Heart right ventricle (tissue), 16 donors: ENCODE measurements at regions of chr19 and their contacts with region 1.

Region 1: GRCh38 chr19:30649934-30650614 is 277.9 kb downstream of the ZNF536 start:
- DNase-seq: peak in 1 of 2 donors; percentile 33
- ATAC-seq: peak in 2 of 8 donors; percentile 29 to 54
- H3K4me3 ChIP-seq: no peak overlapping the region
- H3K27ac ChIP-seq: no peak overlapping the region
- H3K4me1 ChIP-seq: no peaks in the 10 kb centered on the region
- H3K27me3 ChIP-seq: peaks cover 0 to 88% (median 52%) of the 10 kb centered on the region in 7 donors
- CTCF ChIP-seq: peak in 8 of 9 donors; percentile 64 to 90 (median 76)

Region 2: DNA sequence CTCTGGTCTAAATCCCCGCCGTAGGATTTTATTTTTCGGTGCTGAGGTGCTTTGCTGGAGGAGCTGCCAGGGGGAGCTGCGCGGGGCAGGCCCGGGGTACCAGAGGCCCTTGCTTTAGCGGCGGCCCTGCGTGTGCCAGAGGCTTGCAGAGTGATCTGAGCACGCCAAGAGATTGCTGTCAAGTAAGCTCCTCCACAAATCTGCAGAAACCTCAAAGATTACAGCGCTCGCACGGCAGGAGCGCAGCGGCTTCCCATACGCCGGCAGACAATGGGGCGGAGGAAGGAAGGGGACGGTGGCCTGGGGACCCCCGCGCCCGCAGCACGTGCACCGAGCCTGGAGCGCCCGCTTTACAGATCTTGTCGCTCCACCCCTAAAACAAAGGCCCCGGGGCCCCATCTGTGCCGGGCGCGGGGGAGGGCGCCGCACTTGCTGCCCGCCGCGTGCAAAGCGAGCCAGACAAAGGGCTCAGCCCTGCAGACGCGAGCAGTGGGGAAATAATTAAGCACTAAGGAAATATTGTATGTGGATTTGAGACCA is 925.9 kb before region 1 on chr19:
- intact Hi-C with region 1: loop called in 1 of 10 experiments (anchors 10 kb)
- DNase-seq: no peak
- ATAC-seq: peak in 7 of 8 donors; percentile 16 to 61 (median 55)
- H3K4me3 ChIP-seq: peak overlapping the region in 9 of 10 donors; percentile 18 to 47 (median 41)
- H3K27ac ChIP-seq: no peak overlapping the region
- H3K4me1 ChIP-seq: peaks cover 3 to 16% (median 11%) of the 10 kb centered on the region in 9 donors
- H3K27me3 ChIP-seq: peaks cover 0 to 53% (median 32%) of the 10 kb centered on the region in 7 donors
- CTCF ChIP-seq: no peak

Region 3: DNA sequence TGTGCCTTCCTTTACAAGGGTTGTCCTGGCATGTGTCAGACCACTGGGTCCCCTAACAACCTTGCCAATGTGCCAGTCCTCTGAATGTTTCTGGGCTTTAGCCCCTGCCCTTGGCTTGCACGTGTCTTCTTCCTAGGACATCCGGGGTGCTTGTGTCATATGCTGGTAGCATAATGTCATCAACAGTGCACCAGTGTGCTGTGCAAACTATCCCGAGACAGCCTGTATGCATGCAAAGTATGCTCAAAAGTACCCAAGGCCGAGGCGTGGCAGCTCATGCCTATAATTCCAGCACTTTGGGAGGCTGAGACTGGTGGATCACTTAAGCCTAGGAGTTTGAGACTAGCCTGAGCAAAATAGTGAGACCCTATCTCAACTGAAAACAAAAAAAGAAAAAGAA is 914.3 kb before region 1 on chr19:
- intact Hi-C with region 1: loop called in 1 of 10 experiments (anchors 5 kb)
- DNase-seq: no peak
- ATAC-seq: no peak
- H3K4me3 ChIP-seq: no peak overlapping the region
- H3K27ac ChIP-seq: no peak overlapping the region
- H3K4me1 ChIP-seq: no peaks in the 10 kb centered on the region
- H3K27me3 ChIP-seq: peaks cover 0 to 49% (median 16%) of the 10 kb centered on the region in 7 donors
- CTCF ChIP-seq: no peak

Region 4: DNA sequence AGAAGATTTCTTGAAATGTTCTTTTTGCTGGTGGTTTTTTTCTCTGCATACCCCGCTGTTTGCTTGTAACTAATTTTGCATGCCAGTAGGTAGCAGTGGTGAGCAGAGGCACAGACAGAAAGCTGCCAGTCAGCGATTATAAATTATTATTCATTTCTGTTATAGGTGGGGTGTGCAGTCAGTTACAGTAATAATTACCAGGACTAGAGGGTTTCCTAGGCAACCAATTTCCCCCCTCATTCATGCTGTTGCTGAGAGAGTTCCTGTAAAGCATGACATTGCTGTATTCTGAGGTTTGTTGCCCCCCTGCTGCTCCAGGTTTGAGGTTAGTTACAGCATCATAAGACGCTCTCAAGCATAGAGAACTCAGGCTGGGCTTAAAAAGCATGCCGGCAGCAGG is 603.6 kb before region 1 on chr19:
- intact Hi-C with region 1: loop called in 1 of 10 experiments (anchors 10 kb)
- DNase-seq: no peak
- ATAC-seq: no peak
- H3K4me3 ChIP-seq: no peak overlapping the region
- H3K27ac ChIP-seq: no peak overlapping the region
- H3K4me1 ChIP-seq: no peaks in the 10 kb centered on the region
- H3K27me3 ChIP-seq: no peaks in the 10 kb centered on the region
- CTCF ChIP-seq: peak in 8 of 9 donors; percentile 19 to 47 (median 34)

Region 5: GRCh38 chr19:30222428-30222873 is 427.6 kb before region 1 on chr19:
- intact Hi-C with region 1: loop called in 7 of 10 experiments (anchors 5 to 10 kb)
- DNase-seq: peak in 1 of 2 donors; percentile 29
- ATAC-seq: peak in 6 of 8 donors; percentile 23 to 74 (median 48)
- H3K4me3 ChIP-seq: peak overlapping the region in 1 of 10 donors; percentile 14
- H3K27ac ChIP-seq: no peak overlapping the region
- H3K4me1 ChIP-seq: peaks cover 3 to 29% (median 20%) of the 10 kb centered on the region in 9 donors
- H3K27me3 ChIP-seq: peaks cover 0 to 80% (median 68%) of the 10 kb centered on the region in 7 donors
- CTCF ChIP-seq: peak; percentile 32 to 78 (median 65)

Region 6: GRCh38 chr19:30227661-30228428 is 422.2 kb before region 1 on chr19:
- intact Hi-C with region 1: loop called in 8 of 10 experiments (anchors 5 to 10 kb)
- DNase-seq: peak; percentile 65 to 67
- ATAC-seq: peak; percentile 60 to 83 (median 76)
- H3K4me3 ChIP-seq: peak overlapping the region; percentile 21 to 63 (median 56)
- H3K27ac ChIP-seq: peak overlapping the region in 8 of 10 donors; percentile 10 to 77 (median 57)
- H3K4me1 ChIP-seq: peaks cover 3 to 43% (median 27%) of the 10 kb centered on the region in 9 donors
- H3K27me3 ChIP-seq: peaks cover 0 to 85% (median 71%) of the 10 kb centered on the region in 7 donors
- CTCF ChIP-seq: peak; percentile 38 to 75 (median 63)

Region 7: GRCh38 chr19:30535011-30535410 is 115.1 kb before region 1 on chr19:
- intact Hi-C with region 1: no loop called
- DNase-seq: no peak
- ATAC-seq: no peak
- H3K4me3 ChIP-seq: no peak overlapping the region
- H3K27ac ChIP-seq: no peak overlapping the region
- H3K4me1 ChIP-seq: no peaks in the 10 kb centered on the region
- H3K27me3 ChIP-seq: peaks cover 0 to 7% (median 0%) of the 10 kb centered on the region in 7 donors
- CTCF ChIP-seq: no peak